Dendritic cell treated with granulocyte-macrophage colony-stimulating factor and Interleukin-4, amounts not matched to agents 40 ng/mL and 50 ng/mL, for 4 days (primary cell): ENCODE measurements at regions of chr14 and their contacts with region 1.

Region 1: GRCh38 chr14:66495218-66496098 is 9.3 kb downstream of the CCDC196 start:
- H3K4me3 Mint-ChIP-seq: no peak overlapping the region
- H3K27ac Mint-ChIP-seq: no peak overlapping the region
- H3K4me1 Mint-ChIP-seq: peaks cover 3% of the 10 kb centered on the region
- H3K27me3 Mint-ChIP-seq: peaks cover 4% of the 10 kb centered on the region

Region 2: DNA sequence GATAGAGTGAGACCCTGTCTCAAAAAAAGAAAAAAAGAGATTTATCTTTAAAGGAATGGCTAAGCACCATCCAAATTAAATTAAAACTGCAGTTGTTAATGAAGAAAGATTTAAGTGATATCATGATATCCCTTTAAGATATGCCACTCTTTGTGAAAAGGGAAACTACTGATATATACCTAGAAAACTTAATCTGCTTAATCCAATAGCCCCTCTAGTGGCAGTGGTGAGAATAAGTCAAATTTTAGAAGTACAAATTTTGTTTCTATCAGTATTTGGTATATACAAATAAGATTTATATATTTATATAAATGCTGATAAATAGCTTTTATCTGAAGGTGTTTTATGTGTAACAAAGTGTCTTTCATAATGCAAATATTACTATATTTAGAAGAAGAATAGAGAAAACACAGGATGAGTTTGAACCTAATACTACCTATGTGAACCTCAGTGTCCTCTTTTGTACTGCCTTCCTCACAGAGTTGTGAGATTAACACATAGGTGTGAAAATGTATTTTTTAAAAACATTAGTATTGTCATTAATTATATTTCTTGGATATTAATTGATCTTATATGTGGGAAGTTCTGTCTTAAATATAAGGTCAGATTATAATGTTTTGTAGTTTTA is 642.4 kb after region 1 on chr14:
- intact Hi-C with region 1: loop called (anchors 5 kb)
- H3K4me3 Mint-ChIP-seq: no peak overlapping the region
- H3K27ac Mint-ChIP-seq: no peak overlapping the region
- H3K4me1 Mint-ChIP-seq: no peaks in the 10 kb centered on the region
- H3K27me3 Mint-ChIP-seq: no peaks in the 10 kb centered on the region

Region 3: DNA sequence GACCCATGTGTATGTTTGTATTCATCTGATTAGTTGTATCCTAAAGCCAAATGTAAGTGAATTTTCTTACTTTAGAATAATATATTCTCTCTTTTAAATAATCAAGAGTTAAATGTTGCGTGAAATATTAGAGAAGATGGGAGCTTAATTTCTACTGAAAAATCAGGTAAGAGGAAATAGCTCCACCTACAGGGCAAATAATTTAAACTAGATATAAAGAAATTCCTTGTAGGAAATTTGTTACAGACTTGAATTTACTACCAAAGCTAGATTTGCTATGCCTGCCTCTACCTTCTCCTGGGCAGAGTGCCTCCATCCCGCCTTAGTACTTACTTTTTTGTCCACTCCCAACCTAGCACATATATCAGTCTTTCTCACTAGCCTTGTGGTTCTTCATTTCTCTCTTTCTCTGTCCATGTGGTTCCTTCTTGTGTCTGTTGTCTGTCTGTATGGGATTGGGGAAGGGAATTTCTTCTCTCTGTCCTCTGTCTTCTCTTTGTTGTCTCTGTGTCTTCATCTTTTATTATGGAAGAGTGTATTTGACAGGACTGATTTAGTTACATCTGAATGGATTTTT is 790.5 kb after region 1 on chr14:
- intact Hi-C with region 1: loop called (anchors 10 kb)
- H3K4me3 Mint-ChIP-seq: no peak overlapping the region
- H3K27ac Mint-ChIP-seq: no peak overlapping the region
- H3K4me1 Mint-ChIP-seq: no peaks in the 10 kb centered on the region
- H3K27me3 Mint-ChIP-seq: no peaks in the 10 kb centered on the region